Colonic mucosa (tissue), 4 donors: ENCODE measurements at regions of chr16 and their contacts with region 1.

Region 1: GRCh38 chr16:75385507-75386152 is 47.7 kb downstream of the CFDP1 start:
- DNase-seq: no peak
- H3K4me3 ChIP-seq: no peak overlapping the region
- H3K27ac ChIP-seq: no peak overlapping the region
- H3K4me1 ChIP-seq: no peaks in the 10 kb centered on the region
- H3K27me3 ChIP-seq: no peaks in the 10 kb centered on the region
- CTCF ChIP-seq: peak; percentile 54

Region 2: GRCh38 chr16:75198135-75198600 is 187.5 kb before region 1 on chr16:
- intact Hi-C with region 1: loop called (anchors 10 kb)
- DNase-seq: no peak
- H3K4me3 ChIP-seq: no peak overlapping the region
- H3K27ac ChIP-seq: no peak overlapping the region
- H3K4me1 ChIP-seq: no peaks in the 10 kb centered on the region
- H3K27me3 ChIP-seq: no peaks in the 10 kb centered on the region
- CTCF ChIP-seq: no peak

Region 3: GRCh38 chr16:75233599-75233932 is 152.1 kb before region 1 on chr16:
- intact Hi-C with region 1: loop called (anchors 1 kb)
- DNase-seq: no peak
- H3K4me3 ChIP-seq: no peak overlapping the region
- H3K27ac ChIP-seq: no peak overlapping the region
- H3K4me1 ChIP-seq: no peaks in the 10 kb centered on the region
- H3K27me3 ChIP-seq: no peaks in the 10 kb centered on the region
- CTCF ChIP-seq: no peak